ENCODE measurements at regions of chr11 and their contacts with region 1.

Region 1: GRCh38 chr11:57249384-57250319 is 12.6 kb upstream of the APLNR start:
- DNase-seq: peak; percentile 59
- H3K4me3 ChIP-seq: no peak overlapping the region
- H3K27ac ChIP-seq: no peak overlapping the region
- H3K4me1 ChIP-seq: peaks cover 6% of the 10 kb centered on the region
- CTCF ChIP-seq: peak; percentile 88

Region 2: DNA sequence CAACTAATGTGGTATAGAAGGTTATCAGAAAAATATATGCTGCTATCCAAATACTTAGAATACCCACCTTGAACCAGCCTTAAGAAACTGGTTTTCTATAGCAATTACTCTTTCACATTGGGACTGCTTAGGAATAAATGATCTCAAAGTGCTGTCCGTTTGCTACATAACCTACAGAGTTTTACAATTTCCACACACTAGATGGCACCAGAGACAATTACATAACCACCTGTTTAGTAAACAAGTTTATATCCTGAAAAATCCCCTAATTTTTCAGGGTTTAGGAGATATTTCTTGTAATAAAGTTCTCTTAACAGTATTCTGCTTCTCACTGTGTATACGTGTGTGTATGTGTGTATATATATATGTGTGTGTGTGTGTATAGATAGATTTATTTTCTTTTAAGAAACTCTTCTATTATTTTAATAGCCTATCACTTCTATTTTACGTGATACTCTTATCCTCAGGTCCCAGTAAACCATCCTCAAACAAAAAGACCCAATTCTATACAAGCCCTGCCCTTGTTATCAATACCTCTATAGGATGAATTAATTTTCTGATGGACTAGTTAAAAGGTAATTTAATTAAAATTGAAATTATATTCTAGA is 1306.8 kb before region 1 on chr11:
- CTCF ChIA-PET with region 1: no interaction called
- POLR2A ChIA-PET with region 1: no interaction called
- intact Hi-C with region 1: loop called (anchors 10 kb)
- DNase-seq: peak; percentile 32
- H3K4me3 ChIP-seq: no peak overlapping the region
- H3K27ac ChIP-seq: no peak overlapping the region
- H3K4me1 ChIP-seq: no peaks in the 10 kb centered on the region
- CTCF ChIP-seq: peak; percentile 83

Region 3: DNA sequence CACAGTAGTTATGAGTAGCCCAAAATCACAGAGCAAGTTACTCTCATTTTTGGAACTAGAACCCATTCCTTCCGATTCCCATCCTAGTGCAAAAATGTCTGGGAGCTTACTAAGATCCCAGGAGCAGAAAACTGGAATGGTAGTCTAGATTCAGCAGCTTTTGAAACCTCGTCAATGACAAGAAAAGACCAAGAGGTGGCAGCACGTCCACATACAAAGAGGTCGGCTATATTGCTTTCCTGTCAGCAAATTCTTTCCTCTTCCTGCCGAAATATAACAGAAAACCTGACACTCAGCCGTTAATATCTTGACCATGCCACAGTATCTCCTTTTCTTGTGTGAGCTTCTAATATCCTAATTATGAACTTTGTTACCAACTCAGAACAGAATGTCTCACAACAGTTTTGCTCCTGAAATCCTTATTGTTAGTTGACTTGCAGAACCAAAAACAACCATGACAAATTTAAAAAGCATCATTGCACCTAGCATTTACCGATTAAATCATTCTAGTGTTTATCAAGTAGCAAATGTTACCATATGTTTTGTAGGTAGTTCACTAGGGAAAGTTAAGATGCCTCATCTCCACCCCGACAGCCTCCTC is 408.3 kb before region 1 on chr11:
- CTCF ChIA-PET with region 1: interaction called, 3 read pairs
- POLR2A ChIA-PET with region 1: no interaction called
- intact Hi-C with region 1: loop called (anchors 1 kb)
- DNase-seq: peak; percentile 48
- H3K4me3 ChIP-seq: no peak overlapping the region
- H3K27ac ChIP-seq: no peak overlapping the region
- H3K4me1 ChIP-seq: no peaks in the 10 kb centered on the region
- CTCF ChIP-seq: peak; percentile 90

Region 4: GRCh38 chr11:57001674-57002401 is 247.8 kb before region 1 on chr11:
- CTCF ChIA-PET with region 1: no interaction called
- POLR2A ChIA-PET with region 1: no interaction called
- intact Hi-C with region 1: loop called (anchors 10 kb)
- DNase-seq: no peak
- H3K4me3 ChIP-seq: no peak overlapping the region
- H3K27ac ChIP-seq: no peak overlapping the region
- H3K4me1 ChIP-seq: no peaks in the 10 kb centered on the region
- CTCF ChIP-seq: peak; percentile 74

Region 5: DNA sequence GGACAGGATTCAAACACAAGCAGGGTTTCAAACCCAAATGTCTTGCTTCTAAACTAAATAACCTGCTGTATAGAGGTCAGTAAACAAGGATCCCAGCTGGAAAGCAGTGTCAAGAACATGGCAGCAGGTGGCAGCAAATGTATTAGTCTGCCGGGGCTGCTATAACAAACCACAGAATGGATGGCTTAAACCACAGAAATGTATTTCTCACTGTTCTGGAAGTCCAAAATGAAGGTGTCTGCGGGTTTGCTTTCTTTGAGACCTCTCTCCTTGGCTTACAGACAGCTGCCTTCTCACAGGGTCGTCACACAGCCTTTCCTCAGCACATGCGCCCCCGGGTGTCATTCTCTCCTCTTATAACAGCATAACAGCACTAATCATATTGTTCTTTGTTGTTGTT is 133.0 kb before region 1 on chr11:
- CTCF ChIA-PET with region 1: no interaction called
- POLR2A ChIA-PET with region 1: no interaction called
- intact Hi-C with region 1: loop called (anchors 1 kb)
- DNase-seq: peak; percentile 37
- H3K4me3 ChIP-seq: no peak overlapping the region
- H3K27ac ChIP-seq: no peak overlapping the region
- H3K4me1 ChIP-seq: no peaks in the 10 kb centered on the region
- CTCF ChIP-seq: peak; percentile 77

Measured in OCI-LY7 (cell line).